ENCODE measurements at regions of chrX and their contacts with region 1.

Region 1: GRCh38 chrX:44244008-44244407 is 99.5 kb downstream of the EFHC2 start:
- DNase-seq: peak in 4 of 5 donors; percentile 36 to 44 (median 40)
- H3K4me3 ChIP-seq: no peak overlapping the region
- H3K4me3 Mint-ChIP-seq: peak overlapping the region in 1 of 8 donors; percentile 36
- H3K27ac ChIP-seq: no peak overlapping the region
- H3K27ac Mint-ChIP-seq: peak overlapping the region in 4 of 7 donors; percentile 14 to 57 (median 38)
- H3K4me1 ChIP-seq: peaks cover 14% of the 10 kb centered on the region
- H3K4me1 Mint-ChIP-seq: peaks cover 17 to 47% (median 27%) of the 10 kb centered on the region in 4 donors
- H3K27me3 ChIP-seq: no peaks in the 10 kb centered on the region
- H3K27me3 Mint-ChIP-seq: no peaks in the 10 kb centered on the region

Region 2: GRCh38 chrX:43958529-43958928 is 285.5 kb before region 1 on chrX:
- CTCF ChIA-PET with region 1: interaction called, 78 read pairs
- POLR2A ChIA-PET with region 1: interaction called, 18 read pairs
- intact Hi-C with region 1: loop called (anchors 1 kb)
- DNase-seq: peak; percentile 47 to 59 (median 51)
- H3K4me3 ChIP-seq: no peak overlapping the region
- H3K4me3 Mint-ChIP-seq: peak overlapping the region in 1 of 8 donors; percentile 38
- H3K27ac ChIP-seq: no peak overlapping the region
- H3K27ac Mint-ChIP-seq: no peak overlapping the region
- H3K4me1 ChIP-seq: no peaks in the 10 kb centered on the region
- H3K4me1 Mint-ChIP-seq: peaks cover 1 to 6% (median 4%) of the 10 kb centered on the region in 4 donors
- H3K27me3 ChIP-seq: no peaks in the 10 kb centered on the region
- H3K27me3 Mint-ChIP-seq: peaks cover 0 to 4% of the 10 kb centered on the region in 2 donors

Region 3: GRCh38 chrX:44303119-44303518 is 59.1 kb after region 1 on chrX:
- CTCF ChIA-PET with region 1: interaction called, 26 read pairs
- POLR2A ChIA-PET with region 1: interaction called, 3 read pairs
- intact Hi-C with region 1: loop called (anchors 5 kb)
- DNase-seq: peak in 1 of 5 donors; percentile 8
- H3K4me3 ChIP-seq: no peak overlapping the region
- H3K4me3 Mint-ChIP-seq: no peak overlapping the region
- H3K27ac ChIP-seq: no peak overlapping the region
- H3K27ac Mint-ChIP-seq: peak overlapping the region in 1 of 7 donors; percentile 19
- H3K4me1 ChIP-seq: no peaks in the 10 kb centered on the region
- H3K4me1 Mint-ChIP-seq: peaks cover 0 to 1% (median 0%) of the 10 kb centered on the region in 4 donors
- H3K27me3 ChIP-seq: no peaks in the 10 kb centered on the region
- H3K27me3 Mint-ChIP-seq: no peaks in the 10 kb centered on the region

Region 4: DNA sequence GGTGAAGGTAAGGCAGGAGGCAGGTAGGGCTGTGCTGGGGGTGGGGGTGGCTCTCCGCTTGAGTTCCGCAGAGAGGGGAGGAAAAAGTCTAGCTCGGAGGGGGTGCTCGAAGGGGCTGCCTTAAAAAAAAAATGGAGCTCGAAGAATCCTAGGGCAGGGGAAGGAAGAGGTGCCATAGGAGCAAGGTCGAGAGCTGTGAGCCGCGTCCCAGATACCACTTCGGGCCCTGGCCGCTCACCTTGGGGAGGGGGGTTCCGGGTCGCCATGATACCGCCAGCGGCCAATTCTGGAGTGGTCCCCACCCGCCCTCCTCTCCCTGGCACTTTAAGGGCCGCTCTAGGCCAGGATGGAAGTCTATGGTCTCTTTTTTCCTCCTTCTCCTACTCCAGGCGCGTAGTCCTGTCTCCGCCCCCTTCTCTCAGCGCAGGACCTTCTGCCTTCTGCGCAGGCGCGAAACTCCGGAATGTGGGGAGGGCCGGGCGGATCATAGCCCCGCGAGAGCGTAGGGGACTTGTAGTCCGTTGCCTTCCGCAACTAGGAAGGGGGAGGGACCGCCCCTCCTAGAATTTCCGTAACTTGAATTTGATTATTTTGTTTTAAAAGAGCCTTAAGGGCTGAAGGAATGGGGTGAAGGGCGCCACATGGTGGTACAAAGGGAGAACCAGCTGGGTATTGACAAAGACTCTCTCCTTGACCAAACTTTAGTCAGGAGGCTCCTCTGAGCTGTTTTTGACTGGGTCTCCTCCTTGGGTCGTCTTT is 298.7 kb after region 1 on chrX and contains the start of gene FUNDC1:
- CTCF ChIA-PET with region 1: no interaction called
- POLR2A ChIA-PET with region 1: no interaction called
- intact Hi-C with region 1: loop called (anchors 2 kb)
- DNase-seq: peak; percentile 90 to 92 (median 91)
- H3K4me3 ChIP-seq: peak within 1 kb of the TSS; percentile 52 to 66
- H3K4me3 Mint-ChIP-seq: peak within 1 kb of the TSS; percentile 90 to 96 (median 96)
- H3K27ac ChIP-seq: peak within 1 kb of the TSS; percentile 73
- H3K27ac Mint-ChIP-seq: peak within 1 kb of the TSS; percentile 82 to 97 (median 96)
- H3K4me1 ChIP-seq: peaks cover 26% of the 10 kb centered on the region
- H3K4me1 Mint-ChIP-seq: peaks cover 11 to 38% (median 33%) of the 10 kb centered on the region in 4 donors
- H3K27me3 ChIP-seq: no peaks in the 10 kb centered on the region
- H3K27me3 Mint-ChIP-seq: no peaks in the 10 kb centered on the region
- total RNA-seq, gene FUNDC1: 7.4 to 8.7 TPM

Measured in CD4-positive, alpha-beta memory T cell (primary cell).